Heart left ventricle (tissue), 16 donors: ENCODE measurements at regions of chr4 and their contacts with region 1.

Region 1: GRCh38 chr4:126004941-126005340 is 690.2 kb downstream of the FAT4 start:
- DNase-seq: no peak
- ATAC-seq: no peak
- H3K4me3 ChIP-seq: no peak overlapping the region
- H3K27ac ChIP-seq: no peak overlapping the region
- H3K4me1 ChIP-seq: no peaks in the 10 kb centered on the region
- H3K27me3 ChIP-seq: no peaks in the 10 kb centered on the region
- CTCF ChIP-seq: no peak
- POLR2A ChIP-seq: no peak

Region 2: GRCh38 chr4:125801373-125801772 is 203.6 kb before region 1 on chr4:
- intact Hi-C with region 1: no loop called
- DNase-seq: no peak
- ATAC-seq: no peak
- H3K4me3 ChIP-seq: no peak overlapping the region
- H3K27ac ChIP-seq: no peak overlapping the region
- H3K4me1 ChIP-seq: no peaks in the 10 kb centered on the region
- H3K27me3 ChIP-seq: no peaks in the 10 kb centered on the region
- CTCF ChIP-seq: no peak
- POLR2A ChIP-seq: no peak

Region 3: GRCh38 chr4:125961626-125962025 is 43.3 kb before region 1 on chr4:
- intact Hi-C with region 1: loop called in 1 of 10 experiments (anchors 2 kb)
- DNase-seq: no peak
- ATAC-seq: no peak
- H3K4me3 ChIP-seq: no peak overlapping the region
- H3K27ac ChIP-seq: no peak overlapping the region
- H3K4me1 ChIP-seq: no peaks in the 10 kb centered on the region
- H3K27me3 ChIP-seq: no peaks in the 10 kb centered on the region
- CTCF ChIP-seq: no peak
- POLR2A ChIP-seq: no peak

Region 4: GRCh38 chr4:126223784-126224407 is 219.0 kb after region 1 on chr4:
- intact Hi-C with region 1: no loop called
- DNase-seq: no peak
- ATAC-seq: no peak
- H3K4me3 ChIP-seq: no peak overlapping the region
- H3K27ac ChIP-seq: no peak overlapping the region
- H3K4me1 ChIP-seq: peaks cover 0 to 5% (median 0%) of the 10 kb centered on the region in 12 donors
- H3K27me3 ChIP-seq: no peaks in the 10 kb centered on the region
- CTCF ChIP-seq: peak; percentile 33 to 65 (median 50)
- POLR2A ChIP-seq: no peak